ENCODE measurements at regions of chr11 and their contacts with region 1.

Region 1: DNA sequence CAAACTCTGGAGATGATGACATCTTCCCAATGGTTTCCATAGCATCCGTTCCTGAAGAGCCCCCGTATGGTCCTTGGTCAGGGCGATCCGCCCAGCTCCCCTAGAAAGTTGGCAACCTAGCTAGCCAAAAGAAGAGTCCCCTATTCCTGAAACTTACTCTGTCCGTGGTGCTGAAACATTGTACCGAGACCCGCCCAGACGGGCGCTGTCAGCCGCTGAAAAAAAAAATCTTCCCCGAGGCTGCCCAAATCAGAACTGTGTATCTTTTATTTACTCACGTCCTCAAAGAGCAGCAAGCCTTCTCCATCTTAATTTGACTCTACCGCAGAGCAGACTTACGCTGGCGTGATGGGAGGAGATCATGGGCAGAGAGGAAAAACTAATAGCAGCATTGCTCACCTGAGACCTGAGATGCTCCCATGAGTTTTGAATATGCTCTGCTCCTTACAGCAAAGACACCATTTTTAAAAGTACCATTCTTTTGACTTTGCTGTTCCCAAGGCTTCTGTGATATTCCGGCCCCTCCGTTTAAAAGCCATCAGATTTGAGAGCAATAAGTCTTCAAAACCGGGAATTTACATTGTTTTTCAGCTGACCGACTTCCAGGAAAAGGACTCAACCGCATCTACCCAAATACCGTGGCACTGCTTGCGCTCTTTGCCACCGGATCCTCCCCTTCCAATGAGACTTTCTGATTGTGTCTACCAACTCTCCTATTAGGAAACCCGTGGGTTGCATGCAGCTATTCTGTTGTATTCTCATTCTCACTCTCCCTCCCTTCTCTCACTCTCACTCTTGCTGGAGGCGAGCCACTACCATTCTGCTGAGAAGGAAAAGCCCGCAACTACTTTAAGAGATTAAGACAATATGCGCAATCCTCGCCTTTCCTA is at the start of gene SLC17A6:
- DNase-seq: no peak

Region 2: DNA sequence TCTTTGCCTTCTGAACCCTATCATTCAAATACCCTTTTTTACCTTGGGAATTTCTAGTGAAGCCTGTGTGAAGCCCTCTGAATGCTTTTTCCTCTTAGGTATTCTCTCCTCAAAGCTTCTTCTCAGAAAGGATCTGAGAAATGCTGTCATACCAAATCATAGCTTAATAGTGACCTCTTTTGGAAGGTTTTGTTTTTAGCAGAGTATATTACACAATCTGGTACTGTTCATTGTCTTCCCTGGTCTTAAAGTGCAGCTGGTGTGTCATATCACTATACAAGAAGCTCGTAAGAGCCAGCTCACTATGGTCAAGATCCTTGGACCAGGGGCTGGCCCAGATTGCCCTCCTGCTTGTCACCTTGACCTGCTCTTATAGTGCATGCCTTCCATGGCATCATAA is 349.4 kb before region 1 on chr11:
- intact Hi-C with region 1: no loop called
- DNase-seq: no peak

Region 3: GRCh38 chr11:22543261-22543660 is 205.4 kb after region 1 on chr11:
- intact Hi-C with region 1: no loop called
- DNase-seq: no peak

Region 4: DNA sequence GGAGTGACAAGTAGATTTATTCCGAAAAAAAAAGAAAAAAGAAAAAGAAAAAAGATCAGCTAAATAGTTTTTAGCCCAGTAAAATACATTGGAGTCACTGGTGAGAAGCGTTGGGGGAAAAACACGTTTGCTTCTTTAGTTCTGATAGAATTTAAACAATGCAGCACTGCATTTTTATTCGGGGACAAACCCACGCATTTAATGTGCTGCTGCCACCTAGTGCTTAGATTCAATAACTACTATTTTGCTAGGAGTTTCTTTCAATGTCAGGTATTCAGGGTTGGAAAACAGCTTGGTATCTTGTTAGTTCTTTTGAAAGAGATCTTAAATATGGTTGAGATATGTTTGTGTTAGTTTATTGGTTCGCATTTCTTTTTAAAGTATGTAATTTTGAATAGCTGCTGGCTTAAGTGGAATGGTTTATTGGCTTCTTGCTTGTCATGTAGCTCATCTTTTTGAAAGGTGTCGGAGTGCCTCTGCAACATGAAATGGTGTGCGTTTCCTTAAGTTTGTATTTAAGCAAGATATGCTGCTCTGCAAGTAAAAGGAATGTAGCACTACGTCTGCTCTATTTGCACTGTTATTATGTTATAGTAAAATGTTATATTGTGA is 449.8 kb after region 1 on chr11:
- intact Hi-C with region 1: loop called (anchors 10 kb)
- DNase-seq: peak in 27 of 42 donors; percentile 6 to 75 (median 45)